ENCODE measurements at regions of chr15 and their contacts with region 1.

Region 1: GRCh38 chr15:75029378-75030022 is 6.1 kb downstream of the PPCDC start:
- DNase-seq: peak; percentile 79
- CTCF ChIP-seq: peak; percentile 95

Region 2: GRCh38 chr15:74978503-74978902 is 51.0 kb before region 1 on chr15:
- CTCF ChIA-PET with region 1: no interaction called
- POLR2A ChIA-PET with region 1: no interaction called
- DNase-seq: no peak
- CTCF ChIP-seq: no peak

Region 3: DNA sequence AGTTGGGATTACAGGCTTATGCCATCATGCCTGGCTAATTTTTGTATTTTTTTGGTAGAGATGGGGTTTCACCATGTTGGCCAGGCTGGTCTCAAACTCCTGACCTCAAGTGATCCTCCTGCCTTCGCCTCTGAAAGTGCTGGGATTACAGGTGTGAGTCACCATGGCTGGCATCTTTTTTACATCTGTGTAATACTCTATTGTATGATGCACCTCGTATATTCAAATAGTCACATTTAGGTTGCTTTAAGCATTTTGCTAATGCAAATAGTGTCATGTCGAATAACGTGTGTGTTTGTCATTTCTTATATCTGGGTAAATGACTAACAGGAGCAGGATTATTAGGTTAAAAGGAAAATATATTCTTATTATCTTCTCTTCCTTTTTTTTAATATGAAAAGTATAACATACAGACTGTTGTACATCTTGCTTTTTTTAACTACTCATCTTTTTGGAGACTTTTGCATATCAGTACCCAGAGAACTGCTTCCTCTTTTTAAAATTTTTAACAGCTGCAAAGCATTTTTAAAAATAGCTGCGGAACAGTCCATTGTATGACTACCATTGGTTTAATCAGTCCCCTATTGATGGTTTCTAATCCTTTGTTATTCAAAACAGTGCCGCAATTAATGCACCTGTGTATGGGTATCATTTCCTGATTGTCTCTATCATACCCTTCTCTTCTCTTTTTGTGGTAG is 20.7 kb before region 1 on chr15:
- CTCF ChIA-PET with region 1: interaction called, 25 read pairs
- POLR2A ChIA-PET with region 1: no interaction called
- DNase-seq: peak; percentile 73
- CTCF ChIP-seq: no peak

Region 4: DNA sequence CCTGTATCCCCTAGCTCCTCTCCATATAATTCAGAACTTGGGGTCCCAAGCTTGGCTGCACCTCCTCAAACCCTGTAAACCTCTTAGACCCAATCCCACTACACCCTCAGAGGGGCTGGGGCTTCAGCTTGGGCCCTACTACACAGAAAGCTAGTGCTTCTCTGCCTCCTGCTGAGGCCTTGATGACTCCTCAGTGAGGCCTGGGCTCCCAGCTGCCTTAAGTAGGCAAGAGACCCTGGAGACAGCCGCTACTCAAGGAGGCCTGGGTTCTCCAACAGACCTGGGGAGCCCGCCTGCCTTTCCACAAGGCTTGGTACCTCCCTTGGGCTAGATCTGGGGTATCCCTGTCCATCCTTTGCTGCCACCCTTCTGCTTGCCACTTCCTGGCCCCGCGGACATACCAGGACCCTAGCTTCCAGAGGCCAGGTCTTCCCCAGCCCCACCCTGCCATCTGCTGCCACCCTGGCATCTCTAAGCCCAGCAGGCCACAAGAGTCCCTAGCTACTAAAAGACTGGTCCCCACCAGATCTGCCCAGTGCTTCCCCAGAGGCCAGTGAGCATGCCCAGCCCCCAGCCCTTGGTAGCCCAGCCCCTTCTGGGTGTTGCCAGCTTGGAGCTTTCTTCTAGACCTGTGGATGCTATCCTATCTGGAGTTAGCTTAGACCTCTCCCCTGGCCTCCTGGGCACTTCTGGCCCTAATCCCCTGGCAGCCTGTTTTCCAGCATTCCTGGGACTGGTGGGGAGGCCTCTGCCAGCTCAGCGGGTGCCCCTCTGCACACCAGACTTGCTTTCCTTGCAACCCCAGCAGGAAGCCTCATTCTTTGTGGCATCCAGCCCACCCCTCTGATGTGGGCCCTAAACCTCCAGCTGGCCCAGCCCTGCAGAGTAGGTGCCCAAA is 185.9 kb after region 1 on chr15:
- CTCF ChIA-PET with region 1: interaction called, 167 read pairs
- POLR2A ChIA-PET with region 1: no interaction called
- DNase-seq: no peak
- CTCF ChIP-seq: no peak

Region 5: DNA sequence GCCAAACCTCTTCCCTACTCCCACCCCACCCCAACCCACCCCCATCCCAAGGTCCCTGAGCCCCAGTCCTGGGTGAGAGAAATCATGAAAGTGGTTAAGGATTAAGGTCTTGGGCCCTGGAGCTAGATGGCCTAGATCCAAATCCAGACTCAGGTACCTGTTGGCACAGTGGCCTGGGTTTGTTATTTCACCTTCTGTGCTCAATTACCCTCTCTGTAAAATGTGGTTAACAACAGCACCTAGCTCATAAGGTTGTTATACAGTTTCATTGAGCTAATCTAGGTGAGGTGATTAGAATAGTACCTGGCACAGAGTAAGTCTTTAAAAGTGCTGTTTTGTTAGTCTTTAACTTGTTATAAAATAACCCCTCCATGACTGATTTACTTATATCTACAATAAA is 602.4 kb after region 1 on chr15:
- CTCF ChIA-PET with region 1: no interaction called
- POLR2A ChIA-PET with region 1: no interaction called
- DNase-seq: no peak
- CTCF ChIP-seq: no peak